ENCODE measurements at regions of chr10 and their contacts with region 1.

Region 1: DNA sequence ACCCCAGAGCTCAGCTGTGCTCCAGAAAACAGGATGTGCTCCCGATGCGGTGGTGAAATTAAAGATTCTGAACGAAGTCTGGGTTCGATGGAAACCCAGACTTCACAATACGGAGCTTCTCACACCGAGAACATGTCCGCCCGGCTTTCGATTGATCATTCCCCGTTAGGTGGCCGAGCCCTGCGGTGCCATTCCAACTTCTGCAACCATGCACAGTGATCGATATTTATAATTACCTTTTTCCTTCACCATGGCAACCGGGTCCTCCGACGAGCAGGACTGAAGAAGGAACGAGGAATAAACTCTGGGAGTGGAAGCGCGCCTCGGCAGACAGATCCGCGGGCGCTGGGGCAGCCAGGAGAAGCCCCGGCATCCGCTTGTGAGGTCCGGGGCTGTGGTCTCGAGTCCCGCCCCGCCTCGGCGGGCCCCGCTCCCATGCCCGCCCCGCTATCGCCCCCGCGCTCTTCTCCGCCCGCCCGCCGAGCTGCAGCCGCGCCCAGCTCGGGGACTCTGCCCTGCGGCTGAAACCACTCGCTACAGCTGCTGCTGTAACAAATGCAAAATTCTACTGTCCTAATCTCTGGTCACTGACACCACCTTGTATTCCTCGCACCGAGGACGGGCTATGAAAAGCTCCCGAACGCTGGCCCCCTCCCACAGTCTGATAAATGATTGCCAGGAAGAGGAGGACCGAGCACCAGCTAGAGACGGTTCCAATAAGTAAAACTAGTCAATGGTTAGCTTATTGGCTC is 26.2 kb downstream of the ABLIM1 start:
- DNase-seq: peak; percentile 57 to 83
- ATAC-seq: peak; percentile 66
- H3K4me3 ChIP-seq: peak overlapping the region; percentile 48 to 51
- H3K27ac ChIP-seq: no peak overlapping the region
- H3K4me1 ChIP-seq: peaks cover 0 to 3% of the 10 kb centered on the region in 2 donors
- H3K27me3 ChIP-seq: no peaks in the 10 kb centered on the region

Region 2: DNA sequence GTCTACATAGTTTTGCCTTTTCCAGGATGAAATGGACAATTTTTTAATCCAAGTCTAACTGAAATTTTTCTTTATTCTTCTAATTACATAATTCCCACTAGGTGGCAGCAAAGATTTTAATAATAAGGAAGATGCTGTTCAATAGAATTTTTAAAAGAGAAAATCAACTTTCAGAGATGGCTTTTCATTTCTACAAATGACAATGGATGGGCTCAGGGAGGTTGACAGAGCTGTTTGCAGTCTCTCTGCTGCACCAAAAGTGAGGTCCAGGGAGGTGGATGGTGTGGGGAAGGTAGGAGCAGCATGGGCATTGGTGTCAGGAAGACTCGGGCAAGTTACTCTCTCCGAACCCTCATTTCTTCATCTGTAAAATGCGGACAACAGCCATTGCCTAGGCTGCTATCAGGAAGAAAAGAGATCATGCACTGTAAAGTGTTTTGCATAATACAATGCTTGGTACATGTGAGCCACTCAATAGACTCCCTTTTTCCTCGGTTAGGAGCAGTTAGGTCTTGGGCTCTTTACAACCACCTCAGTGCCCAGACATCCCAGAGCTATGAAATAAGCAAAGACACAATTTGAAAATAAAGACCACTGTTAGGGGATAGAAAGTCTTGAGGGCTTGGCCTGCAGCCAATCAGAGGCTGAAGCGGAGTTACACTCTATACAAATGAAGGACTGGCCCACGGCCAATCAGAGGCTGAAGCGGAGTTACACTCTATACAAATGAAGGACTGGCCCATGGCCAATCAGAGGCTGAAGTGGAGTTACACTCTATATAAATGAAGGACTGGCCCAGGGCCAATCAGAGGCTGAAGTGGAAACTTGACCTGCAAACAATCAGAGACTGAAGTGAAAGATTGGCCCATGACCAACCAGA is 80.8 kb before region 1 on chr10:
- intact Hi-C with region 1: loop called in 1 of 2 experiments (anchors 2 kb)
- DNase-seq: peak in 1 of 2 donors; percentile 53
- ATAC-seq: peak; percentile 58
- H3K4me3 ChIP-seq: no peak overlapping the region
- H3K27ac ChIP-seq: no peak overlapping the region
- H3K4me1 ChIP-seq: no peaks in the 10 kb centered on the region
- H3K27me3 ChIP-seq: no peaks in the 10 kb centered on the region

Region 3: GRCh38 chr10:114577133-114577532 is 54.7 kb before region 1 on chr10:
- intact Hi-C with region 1: loop called in 1 of 2 experiments (anchors 5 kb)
- DNase-seq: no peak
- ATAC-seq: no peak
- H3K4me3 ChIP-seq: no peak overlapping the region
- H3K27ac ChIP-seq: no peak overlapping the region
- H3K4me1 ChIP-seq: peaks cover 0 to 2% of the 10 kb centered on the region in 2 donors
- H3K27me3 ChIP-seq: no peaks in the 10 kb centered on the region

Region 4: DNA sequence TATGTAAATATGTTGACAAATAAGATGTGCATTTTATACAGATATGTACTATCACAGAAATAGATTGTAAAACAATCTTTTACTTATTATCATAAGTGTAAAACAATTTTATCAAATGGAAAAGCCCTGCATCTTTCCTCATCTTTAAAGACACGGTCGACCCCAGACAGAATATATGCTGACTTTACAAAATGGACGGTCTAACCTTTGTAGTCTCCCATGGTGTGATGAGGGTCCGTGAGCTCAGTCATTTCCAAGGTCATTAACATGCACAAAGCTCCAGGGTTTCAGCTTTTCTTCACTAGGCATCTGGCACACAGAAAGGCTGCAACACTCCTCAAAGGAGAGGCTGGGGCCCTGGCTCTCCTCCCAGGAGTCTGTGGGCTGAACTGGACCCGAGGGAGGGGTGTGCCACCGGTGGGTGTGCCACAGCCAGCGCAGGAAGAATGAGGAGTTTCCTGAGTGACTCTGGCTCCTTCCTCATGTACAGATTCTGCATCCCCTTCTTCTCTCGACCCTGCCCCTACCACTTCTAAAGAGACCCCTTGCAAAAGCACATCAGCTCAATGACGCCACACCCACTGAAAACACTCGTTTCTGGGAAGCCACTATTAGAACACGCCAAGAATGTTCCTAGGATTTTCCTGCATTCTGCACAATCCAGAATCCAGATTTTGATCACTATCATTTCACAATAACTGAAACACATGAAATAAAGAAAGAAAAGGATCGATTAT is 52.4 kb after region 1 on chr10:
- intact Hi-C with region 1: loop called (anchors 2 kb)
- DNase-seq: peak; percentile 68 to 79
- ATAC-seq: peak; percentile 72
- H3K4me3 ChIP-seq: no peak overlapping the region
- H3K27ac ChIP-seq: no peak overlapping the region
- H3K4me1 ChIP-seq: peaks cover 0 to 4% of the 10 kb centered on the region in 2 donors
- H3K27me3 ChIP-seq: peaks cover 0 to 1% of the 10 kb centered on the region in 2 donors